AG04449 (cell line): ENCODE measurements at regions of chr2 and their contacts with region 1.

Region 1: GRCh38 chr2:189092936-189093335 is 86.6 kb downstream of the COL5A2 start:
- DNase-seq: no peak
- H3K4me3 ChIP-seq: no peak overlapping the region
- CTCF ChIP-seq: no peak

Region 2: DNA sequence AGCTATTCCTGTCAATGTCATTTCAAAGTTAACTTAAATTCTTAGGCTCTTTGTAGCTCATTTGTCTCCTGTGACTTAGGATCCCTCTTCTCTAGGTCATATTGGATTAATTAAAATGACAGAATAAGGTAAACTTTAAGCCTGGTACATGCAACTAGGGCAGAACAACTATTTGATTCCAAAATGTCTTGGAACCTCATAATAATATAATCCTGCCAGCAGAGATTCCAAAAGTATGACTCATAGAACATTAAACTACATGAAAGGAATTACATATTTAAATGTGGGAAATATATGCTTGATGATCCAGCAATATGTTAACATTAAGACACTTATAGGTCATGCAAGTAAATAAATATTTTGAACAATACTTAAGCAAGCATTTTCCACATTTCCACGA is 55.4 kb before region 1 on chr2:
- CTCF ChIA-PET with region 1: no interaction called
- POLR2A ChIA-PET with region 1: no interaction called
- DNase-seq: no peak
- H3K4me3 ChIP-seq: no peak overlapping the region
- CTCF ChIP-seq: no peak

Region 3: GRCh38 chr2:189082376-189082975 is 10.5 kb before region 1 on chr2:
- CTCF ChIA-PET with region 1: interaction called, 18 read pairs
- POLR2A ChIA-PET with region 1: no interaction called
- DNase-seq: peak; percentile 45
- H3K4me3 ChIP-seq: no peak overlapping the region
- CTCF ChIP-seq: no peak

Region 4: DNA sequence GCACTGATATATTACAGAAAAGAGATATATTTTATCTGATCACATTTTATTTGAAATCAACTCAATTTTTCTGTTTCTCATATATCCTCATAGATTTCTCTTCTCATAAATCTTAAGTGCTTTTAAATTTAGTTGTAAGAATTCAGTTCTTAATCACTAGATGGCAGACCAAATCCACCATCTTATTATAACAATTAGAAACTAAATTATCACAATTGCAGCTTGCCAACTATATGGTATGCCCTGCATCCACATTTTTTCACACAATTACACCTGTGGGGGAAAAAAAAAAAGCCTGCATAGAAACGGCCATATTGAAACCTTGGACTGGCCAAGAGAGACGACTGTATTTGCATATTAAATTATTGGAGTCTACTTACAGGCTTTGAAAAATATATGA is 22.2 kb after region 1 on chr2:
- CTCF ChIA-PET with region 1: interaction called, 14 read pairs
- POLR2A ChIA-PET with region 1: interaction called, 3 read pairs
- DNase-seq: no peak
- H3K4me3 ChIP-seq: no peak overlapping the region
- CTCF ChIP-seq: no peak

Region 5: DNA sequence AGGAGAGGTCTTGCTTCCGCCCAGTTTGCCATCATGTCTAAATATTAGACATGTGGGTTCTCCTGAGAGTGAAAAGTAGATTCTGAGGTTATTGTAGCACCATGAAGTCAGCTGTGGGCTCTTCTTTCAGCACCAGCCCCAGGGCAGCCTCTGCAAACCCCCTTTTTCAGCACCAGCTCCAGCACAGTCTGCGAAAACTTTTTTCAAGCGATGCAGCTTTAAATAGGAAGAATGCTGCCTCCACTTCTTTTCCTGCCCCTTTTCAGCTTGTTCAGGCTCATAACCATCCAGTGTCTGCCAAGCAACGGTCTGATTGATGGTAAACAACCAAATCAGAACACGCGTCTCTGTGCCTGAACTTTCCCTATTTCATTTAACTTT is 86.6 kb after region 1 on chr2 and contains the start of gene COL5A2:
- CTCF ChIA-PET with region 1: interaction called, 40 read pairs
- POLR2A ChIA-PET with region 1: interaction called, 10 read pairs
- DNase-seq: peak; percentile 80
- H3K4me3 ChIP-seq: peak within 1 kb of the TSS; percentile 79
- CTCF ChIP-seq: no peak

Region 6: DNA sequence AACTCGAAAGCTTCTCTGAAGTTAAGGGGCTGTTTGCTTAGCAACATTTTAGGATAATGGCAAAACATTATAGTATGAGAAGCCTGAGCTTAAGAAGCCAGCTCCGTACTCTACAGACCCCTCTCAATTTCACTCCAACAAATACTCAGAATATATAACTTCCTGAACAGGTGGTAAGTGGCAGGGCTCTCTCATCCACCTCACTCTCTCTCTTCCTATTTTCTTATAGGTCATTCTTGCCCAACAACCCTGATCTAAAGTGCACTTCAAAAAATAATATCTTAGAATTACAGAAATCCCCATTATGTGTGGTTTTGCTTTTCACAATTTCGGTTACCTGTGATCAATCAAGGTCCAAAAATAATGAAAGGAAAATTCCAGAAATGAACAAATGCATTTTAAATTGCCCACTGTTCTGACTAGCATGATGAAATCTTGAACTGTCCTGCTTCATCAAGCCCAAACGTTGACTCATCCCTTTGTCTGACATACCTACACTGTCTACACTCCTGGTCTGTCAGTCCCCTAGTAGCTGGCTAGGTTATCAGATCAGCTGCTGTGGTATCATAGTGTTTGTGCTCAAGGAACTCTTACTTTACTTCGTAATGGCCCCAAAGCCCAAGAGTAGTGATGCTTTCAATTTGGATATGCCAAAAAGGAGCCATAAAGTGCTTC is 209.5 kb after region 1 on chr2:
- CTCF ChIA-PET with region 1: no interaction called
- POLR2A ChIA-PET with region 1: no interaction called
- DNase-seq: no peak
- H3K4me3 ChIP-seq: no peak overlapping the region
- CTCF ChIP-seq: no peak

Region 7: GRCh38 chr2:189347540-189347939 is 254.6 kb after region 1 on chr2:
- CTCF ChIA-PET with region 1: interaction called, 16 read pairs
- POLR2A ChIA-PET with region 1: no interaction called
- DNase-seq: peak; percentile 85
- H3K4me3 ChIP-seq: no peak overlapping the region
- CTCF ChIP-seq: peak; percentile 20